Aorta (tissue), 5 donors: ENCODE measurements at regions of chr1 and their contacts with region 1.

Region 1: DNA sequence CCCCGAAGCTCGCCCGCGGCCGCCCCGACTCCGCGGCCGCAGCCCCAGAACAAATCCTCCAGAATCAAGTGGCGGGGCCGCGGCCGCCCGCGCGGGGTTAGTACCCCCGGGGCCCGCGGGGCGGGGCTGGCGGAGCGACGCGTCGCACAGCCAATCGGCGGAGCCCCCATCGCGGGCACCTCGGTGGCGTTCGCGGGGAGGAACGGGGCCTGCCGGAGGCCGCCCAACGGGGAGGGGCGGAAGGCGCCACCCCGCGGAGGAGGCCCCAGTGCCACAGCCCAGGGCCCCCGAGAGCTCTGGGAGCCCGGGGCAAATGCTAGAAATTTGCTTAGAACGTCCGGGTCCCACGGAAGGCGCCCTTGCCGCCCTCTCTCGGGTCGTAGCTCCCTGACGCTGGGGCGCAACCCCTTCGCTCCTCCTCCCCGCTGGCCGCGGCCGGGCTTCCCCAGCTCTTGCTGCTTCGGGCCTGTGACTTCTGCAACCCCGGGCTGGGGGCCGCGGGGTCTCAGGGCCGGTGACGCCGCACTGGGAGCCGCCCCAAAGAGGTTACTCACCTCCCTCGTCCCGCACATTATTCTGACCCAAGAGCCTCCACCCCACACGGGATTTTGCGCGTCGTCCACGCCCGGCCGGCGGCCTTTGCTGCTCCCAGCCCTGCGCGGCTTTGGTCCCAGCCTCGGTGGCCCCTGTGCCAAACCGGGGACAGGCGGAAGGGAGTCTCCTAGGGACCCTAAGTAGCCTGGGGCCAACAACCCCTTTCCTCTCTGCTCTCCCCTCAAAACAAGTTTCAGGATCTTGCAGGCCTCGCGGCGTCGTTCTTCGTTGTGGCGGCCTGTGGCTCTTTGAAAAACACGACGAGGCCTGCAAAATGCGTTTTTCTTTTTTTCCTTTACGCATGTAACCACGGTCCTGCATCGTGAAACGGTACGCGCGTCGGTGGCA is at the start of gene RUNX3:
- DNase-seq: peak; percentile 87 to 88
- ATAC-seq: peak; percentile 68
- H3K4me3 ChIP-seq: peak within 1 kb of the TSS; percentile 4 to 31
- H3K27ac ChIP-seq: no peak within 1 kb of the TSS
- H3K4me1 ChIP-seq: no peaks in the 10 kb centered on the region
- H3K27me3 ChIP-seq: no peaks in the 10 kb centered on the region
- total RNA-seq, gene RUNX3: 2.9 to 4.4 TPM

Region 2: GRCh38 chr1:25037174-25038074 is 106.9 kb after region 1 on chr1:
- intact Hi-C with region 1: loop called in 1 of 2 experiments (anchors 5 kb)
- DNase-seq: no peak
- ATAC-seq: no peak
- H3K4me3 ChIP-seq: no peak overlapping the region
- H3K27ac ChIP-seq: no peak overlapping the region
- H3K4me1 ChIP-seq: no peaks in the 10 kb centered on the region
- H3K27me3 ChIP-seq: no peaks in the 10 kb centered on the region

Region 3: DNA sequence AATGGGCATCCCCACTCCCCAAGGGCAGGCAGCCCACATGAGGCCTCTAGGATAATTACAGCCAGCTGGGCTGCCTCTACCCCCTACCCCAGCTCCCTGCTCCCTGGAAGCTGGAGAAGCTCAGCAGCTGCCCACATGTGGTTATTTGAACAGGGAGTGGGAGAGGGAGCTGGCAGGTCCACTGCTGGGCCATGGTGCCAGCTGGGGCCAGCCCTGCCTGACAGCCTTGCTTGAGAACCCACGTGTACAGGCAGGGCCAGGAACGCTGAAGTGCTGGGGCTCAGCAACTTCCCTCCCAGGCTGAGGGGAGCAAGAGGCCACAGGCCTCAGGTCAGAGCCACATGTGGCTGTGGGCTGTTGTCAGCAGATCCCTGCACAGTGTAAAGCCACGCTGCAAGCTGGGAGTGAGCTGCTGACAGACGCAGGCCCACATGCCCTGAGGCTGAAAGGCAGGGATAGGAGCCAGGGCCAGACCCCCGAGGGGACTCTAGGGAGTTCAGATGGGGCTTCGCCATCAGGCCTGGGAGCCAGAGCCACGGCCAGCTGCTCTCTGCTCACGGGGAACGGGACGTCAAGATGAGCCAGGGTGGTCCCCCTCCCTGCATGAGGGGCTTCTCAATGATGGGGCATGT is 172.8 kb after region 1 on chr1:
- intact Hi-C with region 1: loop called in 1 of 2 experiments (anchors 5 kb)
- DNase-seq: no peak
- ATAC-seq: no peak
- H3K4me3 ChIP-seq: no peak overlapping the region
- H3K27ac ChIP-seq: no peak overlapping the region
- H3K4me1 ChIP-seq: no peaks in the 10 kb centered on the region
- H3K27me3 ChIP-seq: no peaks in the 10 kb centered on the region

Region 4: DNA sequence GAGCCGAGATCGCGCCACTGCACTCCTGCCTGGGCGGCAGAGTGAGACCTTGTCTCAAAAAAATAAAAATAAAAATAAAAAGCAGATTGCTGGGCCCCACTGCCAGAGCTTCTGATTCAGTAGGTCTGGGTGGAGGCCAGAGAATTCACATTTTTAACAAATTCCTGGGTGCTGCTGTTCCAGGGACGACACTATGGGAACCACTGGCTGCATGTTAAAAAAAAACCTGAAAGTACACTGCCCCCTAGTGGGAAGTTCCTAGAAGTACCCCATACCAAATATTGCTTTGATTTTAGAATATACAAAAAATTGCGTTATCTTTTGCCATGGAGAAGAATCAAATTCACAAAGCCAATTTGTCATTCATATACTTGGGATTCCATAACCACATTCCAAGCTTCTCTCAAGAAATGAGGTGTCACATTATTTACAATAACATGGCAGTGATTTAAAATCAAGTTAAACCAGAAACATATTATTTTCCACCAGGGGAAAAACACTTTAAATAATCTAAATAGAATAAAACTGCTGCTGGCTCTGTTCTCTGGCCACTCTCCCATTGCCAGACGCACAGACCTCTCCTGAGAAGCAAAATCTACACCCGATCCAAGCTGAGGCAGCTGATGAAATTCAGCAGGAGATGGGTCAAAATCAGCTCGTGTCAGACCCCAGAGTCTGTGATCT is 274.5 kb after region 1 on chr1:
- intact Hi-C with region 1: loop called in 1 of 2 experiments (anchors 10 kb)
- DNase-seq: peak in 1 of 2 donors; percentile 26
- ATAC-seq: no peak
- H3K4me3 ChIP-seq: no peak overlapping the region
- H3K27ac ChIP-seq: no peak overlapping the region
- H3K4me1 ChIP-seq: no peaks in the 10 kb centered on the region
- H3K27me3 ChIP-seq: no peaks in the 10 kb centered on the region